Psoas muscle (tissue), 8 donors: ENCODE measurements at regions of chr1 and their contacts with region 1.

Region 1: DNA sequence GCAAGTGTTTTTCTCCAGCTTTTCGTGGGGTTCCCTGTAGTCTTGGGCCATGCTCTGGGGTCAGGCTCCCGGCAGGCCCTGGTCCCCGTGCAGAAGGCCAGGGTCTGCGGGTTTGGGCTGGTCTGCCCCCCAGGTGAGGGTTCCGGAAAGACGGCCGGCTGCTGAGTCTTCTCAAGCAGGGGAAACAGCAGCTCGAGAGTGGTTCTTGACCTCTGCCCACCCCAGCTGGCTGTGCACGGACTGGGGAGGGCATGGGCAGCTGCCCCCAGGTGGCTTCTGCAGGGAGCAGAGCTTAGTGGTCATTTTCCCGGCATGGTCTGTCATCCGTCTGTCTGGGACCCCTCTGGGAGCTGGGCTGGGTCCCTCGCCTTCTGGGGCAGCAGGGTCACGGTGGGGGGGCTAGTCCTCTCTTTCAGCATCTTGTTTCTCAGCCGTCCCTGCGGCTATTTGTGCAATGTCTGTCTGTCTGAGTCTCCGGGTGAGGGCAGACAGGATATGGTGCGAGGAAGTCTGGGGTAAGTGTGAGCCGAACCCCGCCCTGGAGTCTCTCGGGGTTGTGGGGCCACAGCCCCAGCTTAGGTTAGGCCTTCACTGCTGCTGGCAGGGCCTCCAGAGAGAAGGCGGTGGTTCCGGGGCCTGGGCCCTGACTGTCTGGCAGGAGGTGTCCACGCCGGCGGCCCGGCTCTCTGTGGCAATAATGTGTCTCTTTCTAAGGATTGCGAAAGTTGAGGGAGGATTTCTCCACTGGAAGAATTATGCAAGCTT is 6.1 kb downstream of the SKI start:
- DNase-seq: peak; percentile 96 to 97
- ATAC-seq: peak; percentile 68 to 82 (median 82)
- H3K4me3 ChIP-seq: peak overlapping the region; percentile 71
- H3K27ac ChIP-seq: peak overlapping the region; percentile 76
- H3K4me1 ChIP-seq: peaks cover 85% of the 10 kb centered on the region
- H3K27me3 ChIP-seq: no peaks in the 10 kb centered on the region
- CTCF ChIP-seq: no peak

Region 2: DNA sequence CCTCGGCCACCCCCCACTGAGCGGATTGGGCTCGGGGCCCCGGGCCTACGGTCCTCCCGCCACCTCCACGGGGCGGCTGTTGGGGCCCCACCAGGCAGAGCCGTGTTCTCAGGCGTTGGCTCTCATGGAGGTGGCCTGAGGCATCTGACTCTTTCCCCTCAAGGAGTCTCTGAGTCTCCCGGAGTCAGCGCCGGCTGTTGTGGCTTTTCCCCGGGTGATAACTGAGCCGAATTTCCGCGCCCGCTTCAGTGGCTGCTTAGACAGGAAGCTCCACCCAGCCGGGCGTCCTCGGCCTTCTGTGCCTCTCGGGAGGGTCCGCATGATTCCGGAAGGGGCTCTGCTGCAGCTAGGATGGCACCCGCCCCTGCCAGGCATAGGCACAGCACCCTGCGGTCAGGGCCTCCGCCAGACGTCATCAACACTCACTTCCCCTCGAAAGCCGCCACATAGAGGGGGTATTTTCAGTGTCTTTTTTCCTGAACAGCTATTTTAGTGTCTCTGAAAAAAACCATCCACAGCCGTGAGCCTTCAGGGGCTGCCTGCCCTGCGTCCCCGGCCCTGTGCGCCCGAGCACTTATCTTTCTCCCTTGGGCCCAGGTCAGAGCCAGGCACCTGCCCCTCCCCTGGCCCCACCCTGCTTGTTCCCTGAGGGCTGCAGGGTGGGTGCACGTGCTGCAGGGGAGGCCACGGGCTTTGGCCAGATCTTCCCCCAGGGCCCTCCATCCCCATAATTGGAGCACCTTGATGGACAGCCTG is 66.8 kb after region 1 on chr1:
- intact Hi-C with region 1: loop called in 1 of 2 experiments (anchors 10 kb)
- DNase-seq: peak; percentile 85 to 89
- ATAC-seq: peak; percentile 29 to 58 (median 38)
- H3K4me3 ChIP-seq: peak overlapping the region; percentile 53
- H3K27ac ChIP-seq: peak overlapping the region; percentile 63
- H3K4me1 ChIP-seq: peaks cover 30% of the 10 kb centered on the region
- H3K27me3 ChIP-seq: no peaks in the 10 kb centered on the region
- CTCF ChIP-seq: no peak

Region 3: GRCh38 chr1:2314803-2315673 is 80.9 kb after region 1 on chr1:
- intact Hi-C with region 1: loop called in 1 of 2 experiments (anchors 5 kb)
- DNase-seq: peak; percentile 76 to 77
- ATAC-seq: peak in 3 of 4 donors; percentile 24 to 45 (median 41)
- H3K4me3 ChIP-seq: peak overlapping the region; percentile 69
- H3K27ac ChIP-seq: peak overlapping the region; percentile 74
- H3K4me1 ChIP-seq: peaks cover 16% of the 10 kb centered on the region
- H3K27me3 ChIP-seq: peaks cover 0 to 28% (median 3%) of the 10 kb centered on the region in 3 donors
- CTCF ChIP-seq: peak; percentile 94